AG04449 (cell line): ENCODE measurements at regions of chr9 and their contacts with region 1.

Region 1: DNA sequence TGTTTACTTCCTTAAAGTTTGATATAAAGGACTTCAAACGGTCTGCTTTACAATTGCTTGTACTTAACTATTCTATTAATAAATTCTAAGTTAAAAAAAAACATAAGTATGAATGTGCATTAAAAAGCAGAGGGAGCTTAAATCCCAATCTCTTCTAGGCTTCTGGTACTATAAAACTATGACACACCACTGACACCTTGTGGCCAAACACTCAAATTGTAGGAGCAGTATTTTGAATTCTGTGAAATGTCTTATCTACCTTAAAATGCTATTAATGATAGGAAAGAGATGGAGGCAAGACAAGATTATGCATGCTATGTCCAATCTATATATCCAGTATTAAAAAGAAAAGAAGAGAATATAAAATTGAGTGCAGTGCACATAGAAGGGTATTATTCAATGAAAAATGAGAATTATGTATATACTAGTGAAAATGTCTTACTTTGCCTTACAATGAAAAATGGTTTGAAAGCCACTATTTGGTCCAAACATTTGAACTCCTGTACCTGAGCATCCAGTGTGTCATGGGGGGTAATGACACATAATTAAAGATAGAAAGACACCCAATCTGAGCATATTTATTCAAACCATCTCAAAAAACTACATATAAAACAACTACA is 87.6 kb downstream of the ERP44 start:
- DNase-seq: no peak
- H3K4me3 ChIP-seq: no peak overlapping the region
- CTCF ChIP-seq: peak; percentile 11

Region 2: DNA sequence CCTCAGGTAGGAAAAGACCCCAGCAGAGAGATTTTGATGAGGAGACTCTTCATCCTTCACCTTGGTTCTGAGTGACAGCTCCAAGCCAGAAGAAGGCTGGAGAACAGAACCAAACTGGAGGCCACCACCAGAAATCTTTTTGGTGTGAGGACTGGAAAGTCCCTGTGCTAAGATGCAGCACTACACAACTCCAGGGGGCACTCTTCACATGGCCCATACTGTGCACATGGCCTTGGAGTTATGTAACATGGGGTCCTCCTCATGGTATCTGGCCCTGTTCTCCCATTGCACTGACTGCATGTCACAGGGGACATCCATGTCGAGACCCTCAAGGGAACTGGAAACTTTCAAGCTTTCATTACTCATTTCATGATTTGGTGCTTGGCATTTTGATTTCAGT is 122.1 kb before region 1 on chr9:
- CTCF ChIA-PET with region 1: no interaction called
- POLR2A ChIA-PET with region 1: no interaction called
- DNase-seq: no peak
- H3K4me3 ChIP-seq: no peak overlapping the region
- CTCF ChIP-seq: no peak

Region 3: GRCh38 chr9:99971410-99971809 is 39.8 kb before region 1 on chr9:
- CTCF ChIA-PET with region 1: no interaction called
- POLR2A ChIA-PET with region 1: no interaction called
- DNase-seq: no peak
- H3K4me3 ChIP-seq: no peak overlapping the region
- CTCF ChIP-seq: no peak

Region 4: DNA sequence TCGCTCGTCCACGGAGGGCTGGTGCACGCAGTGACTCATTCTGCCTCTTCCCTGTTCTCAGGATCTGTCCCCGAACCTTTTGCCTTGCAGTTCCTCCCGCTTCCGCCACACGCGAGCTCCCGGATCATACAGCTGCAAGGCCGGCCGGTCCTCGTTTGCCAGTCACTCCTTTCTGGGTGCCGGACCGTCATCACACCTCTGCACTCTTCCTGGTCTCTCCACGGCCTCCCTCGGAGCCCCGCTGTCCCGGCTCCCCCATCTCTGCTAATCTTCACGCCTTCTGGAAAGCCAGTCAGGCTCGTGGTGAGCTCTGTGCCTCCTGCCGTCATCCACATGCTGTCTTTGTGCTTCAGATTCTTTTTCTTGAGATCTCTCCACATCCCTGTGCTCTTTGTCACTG is 12.9 kb before region 1 on chr9:
- CTCF ChIA-PET with region 1: interaction called, 12 read pairs
- POLR2A ChIA-PET with region 1: no interaction called
- DNase-seq: no peak
- H3K4me3 ChIP-seq: no peak overlapping the region
- CTCF ChIP-seq: no peak

Region 5: DNA sequence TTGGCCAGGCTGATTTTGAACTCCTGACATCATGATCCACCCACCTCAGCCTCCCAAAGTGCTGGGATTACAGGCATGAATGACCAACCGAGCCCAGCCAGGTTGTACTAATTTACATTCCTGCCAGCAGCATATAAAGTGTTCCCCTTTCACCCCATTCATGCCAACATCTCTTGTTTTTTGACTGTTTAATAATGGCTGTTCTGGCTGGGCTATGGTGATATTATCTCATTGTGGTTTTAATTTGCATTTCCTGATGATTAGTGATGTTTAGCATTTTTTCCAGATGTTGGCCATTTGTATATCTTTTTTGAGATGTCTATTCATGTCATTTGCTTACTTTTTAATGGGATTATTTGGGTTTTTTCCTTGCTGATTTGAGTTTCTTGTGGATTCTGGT is 175.2 kb after region 1 on chr9:
- CTCF ChIA-PET with region 1: no interaction called
- POLR2A ChIA-PET with region 1: no interaction called
- DNase-seq: no peak
- H3K4me3 ChIP-seq: no peak overlapping the region
- CTCF ChIP-seq: no peak